Naive thymus-derived CD4-positive, alpha-beta T cell (primary cell): ENCODE measurements at regions of chr16 and their contacts with region 1.

Region 1: GRCh38 chr16:28823872-28824716 is 1.3 kb downstream of the ATXN2L start:
- DNase-seq: peak; percentile 92 to 97 (median 94)
- ATAC-seq: peak; percentile 82
- H3K4me3 ChIP-seq: peak overlapping the region; percentile 79
- H3K4me3 Mint-ChIP-seq: peak overlapping the region; percentile 92 to 99 (median 97)
- H3K27ac ChIP-seq: peak overlapping the region; percentile 94
- H3K27ac Mint-ChIP-seq: peak overlapping the region; percentile 96 to 100 (median 99)
- H3K4me1 ChIP-seq: peaks cover 19 to 20% of the 10 kb centered on the region in 2 donors
- H3K4me1 Mint-ChIP-seq: peaks cover 14 to 55% (median 52%) of the 10 kb centered on the region in 7 donors
- H3K27me3 ChIP-seq: no peaks in the 10 kb centered on the region
- H3K27me3 Mint-ChIP-seq: peaks cover 0 to 4% (median 0%) of the 10 kb centered on the region in 5 donors

Region 2: DNA sequence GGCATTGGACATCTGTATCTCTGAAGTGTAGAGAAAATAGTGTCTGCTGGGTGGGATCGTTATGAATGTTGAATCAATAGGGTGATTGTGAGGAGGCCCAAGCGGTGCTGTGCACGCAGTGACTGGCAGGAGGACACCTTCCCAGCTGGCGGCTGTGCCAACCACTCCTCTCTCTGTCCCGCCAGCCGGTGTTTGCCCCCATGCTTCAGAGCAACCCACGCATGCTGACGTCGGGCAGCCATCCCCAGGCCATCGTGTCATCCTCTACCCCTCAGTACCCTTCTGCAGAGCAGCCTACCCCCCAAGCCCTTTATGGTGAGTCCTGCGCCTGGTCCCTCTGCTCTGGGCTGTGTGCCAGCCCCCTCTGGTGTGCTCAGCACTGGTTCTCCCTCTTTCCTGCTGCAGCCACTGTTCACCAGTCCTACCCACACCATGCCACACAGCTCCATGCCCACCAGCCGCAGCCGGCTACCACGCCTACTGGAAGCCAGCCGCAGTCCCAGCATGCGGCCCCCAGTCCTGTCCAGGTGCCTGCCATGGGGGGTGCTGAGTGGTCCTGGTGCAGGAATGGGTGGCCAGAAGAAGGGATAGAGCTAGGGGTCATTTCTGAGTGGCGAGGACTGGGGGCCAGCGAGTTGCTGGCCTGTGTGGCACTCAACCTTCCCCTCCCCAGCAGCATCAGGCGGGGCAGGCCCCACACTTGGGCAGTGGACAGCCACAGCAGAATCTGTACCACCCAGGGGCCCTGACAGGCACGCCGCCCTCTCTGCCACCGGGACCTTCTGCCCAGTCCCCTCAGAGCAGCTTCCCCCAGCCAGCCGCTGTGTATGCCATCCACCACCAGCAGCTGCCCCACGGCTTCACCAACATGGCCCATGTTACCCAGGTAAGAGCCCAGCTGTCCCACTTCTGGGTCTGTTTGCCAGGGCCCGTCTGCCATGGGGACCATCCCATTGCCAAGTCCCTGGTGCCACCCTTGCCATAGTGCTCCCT is 11.1 kb after region 1 on chr16:
- CTCF ChIA-PET with region 1: interaction called, 3 read pairs
- POLR2A ChIA-PET with region 1: interaction called, 13 read pairs
- intact Hi-C with region 1: no loop called
- DNase-seq: peak in 1 of 9 donors; percentile 8
- ATAC-seq: no peak
- H3K4me3 ChIP-seq: no peak overlapping the region
- H3K4me3 Mint-ChIP-seq: peak overlapping the region in 2 of 10 donors; percentile 18 to 37
- H3K27ac ChIP-seq: no peak overlapping the region
- H3K27ac Mint-ChIP-seq: peak overlapping the region in 4 of 9 donors; percentile 15 to 54 (median 37)
- H3K4me1 ChIP-seq: no peaks in the 10 kb centered on the region
- H3K4me1 Mint-ChIP-seq: peaks cover 0 to 16% (median 11%) of the 10 kb centered on the region in 7 donors
- H3K27me3 ChIP-seq: no peaks in the 10 kb centered on the region
- H3K27me3 Mint-ChIP-seq: no peaks in the 10 kb centered on the region

Region 3: DNA sequence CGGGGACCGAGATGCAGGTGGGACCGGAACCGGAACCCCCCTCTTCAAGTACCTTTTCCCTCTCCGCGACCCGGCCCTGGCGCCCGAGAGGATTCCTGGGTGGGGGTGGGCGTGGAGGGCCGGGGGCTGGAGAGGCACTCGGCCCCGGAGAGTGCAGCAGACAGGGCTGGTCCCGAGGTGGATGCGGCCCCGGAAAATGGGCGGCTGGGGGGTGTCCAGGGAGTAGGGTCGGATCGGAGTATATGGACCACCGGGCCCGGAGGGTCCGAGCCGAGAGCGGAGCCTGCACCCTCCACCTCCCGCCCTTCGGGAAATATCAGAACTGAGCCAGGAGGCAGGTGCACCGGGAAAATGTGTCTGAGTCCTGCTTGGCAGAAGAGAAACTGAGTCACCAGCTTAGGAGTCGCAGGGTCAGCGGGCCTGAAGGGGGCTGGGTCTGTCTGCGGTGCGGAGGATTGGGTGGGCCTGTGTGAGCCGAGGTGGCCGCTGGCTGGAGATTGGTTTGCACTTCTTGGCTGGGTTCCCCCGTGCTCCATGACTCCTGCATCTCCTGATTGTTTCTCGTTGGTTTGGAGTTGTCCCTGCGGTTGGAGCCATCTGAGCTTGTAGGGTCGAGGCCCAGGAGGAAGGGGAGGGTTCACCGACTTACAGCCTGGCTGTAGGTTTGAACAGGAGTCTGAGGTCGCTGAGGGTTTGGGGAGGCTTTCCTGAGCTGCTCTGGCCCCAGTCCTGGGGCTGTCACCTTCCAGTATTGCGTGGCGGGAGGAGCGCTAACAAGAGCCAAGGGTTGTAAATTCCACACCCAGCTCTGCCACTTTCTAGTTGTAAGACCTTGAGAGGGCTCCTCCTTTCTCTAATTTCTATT is 40.1 kb after region 1 on chr16:
- CTCF ChIA-PET with region 1: interaction called, 3 read pairs
- POLR2A ChIA-PET with region 1: interaction called, 14 read pairs
- intact Hi-C with region 1: loop called (anchors 1 kb)
- DNase-seq: peak in 4 of 9 donors; percentile 24 to 43 (median 30)
- ATAC-seq: no peak
- H3K4me3 ChIP-seq: peak overlapping the region; percentile 96
- H3K4me3 Mint-ChIP-seq: peak overlapping the region; percentile 97 to 100 (median 99)
- H3K27ac ChIP-seq: peak overlapping the region; percentile 85
- H3K27ac Mint-ChIP-seq: peak overlapping the region; percentile 95 to 99 (median 97)
- H3K4me1 ChIP-seq: peaks cover 7 to 11% of the 10 kb centered on the region in 2 donors
- H3K4me1 Mint-ChIP-seq: peaks cover 15 to 42% (median 29%) of the 10 kb centered on the region in 7 donors
- H3K27me3 ChIP-seq: no peaks in the 10 kb centered on the region
- H3K27me3 Mint-ChIP-seq: no peaks in the 10 kb centered on the region

Region 4: DNA sequence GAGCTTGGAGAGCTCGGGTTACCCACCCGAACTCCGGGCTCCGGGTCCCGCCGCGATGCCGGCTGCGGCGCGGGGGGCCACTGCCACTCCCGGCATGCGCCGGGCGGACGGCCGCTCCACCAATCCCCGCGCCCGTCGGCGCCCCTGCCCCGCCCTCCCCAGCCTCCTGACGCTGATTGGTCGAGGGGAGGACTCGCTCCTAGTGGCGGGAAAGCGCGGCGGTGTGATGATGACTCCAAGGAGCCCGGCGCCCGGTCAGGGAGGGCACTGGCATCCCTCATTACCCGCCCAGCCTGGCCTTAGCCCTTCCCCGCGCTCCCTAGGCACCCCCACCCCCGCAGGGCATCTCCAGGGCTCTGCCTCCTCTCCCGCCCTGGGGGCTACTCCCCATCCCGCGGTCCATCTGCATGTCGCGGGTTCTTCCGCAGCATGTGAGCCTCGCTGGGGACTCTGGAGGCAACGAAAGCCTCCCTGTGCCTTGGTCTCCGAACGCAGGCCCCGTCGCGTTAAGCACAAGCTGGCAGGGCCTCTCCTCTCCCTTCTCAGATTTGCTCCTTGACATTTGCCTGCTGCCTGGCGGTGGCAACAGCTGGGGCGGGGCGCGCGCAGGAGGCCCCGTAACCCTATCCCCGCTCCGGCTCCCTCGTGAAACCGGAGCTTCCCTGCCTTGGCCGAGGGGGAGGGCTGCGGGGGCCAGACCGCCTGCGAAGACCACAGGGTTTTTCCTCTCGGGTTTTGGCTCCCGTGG is 55.9 kb after region 1 on chr16:
- CTCF ChIA-PET with region 1: no interaction called
- POLR2A ChIA-PET with region 1: no interaction called
- intact Hi-C with region 1: loop called in 1 of 2 experiments (anchors 1 kb)
- DNase-seq: peak; percentile 64 to 89 (median 78)
- ATAC-seq: peak; percentile 99
- H3K4me3 ChIP-seq: peak overlapping the region; percentile 92
- H3K4me3 Mint-ChIP-seq: peak overlapping the region; percentile 82 to 93 (median 88)
- H3K27ac ChIP-seq: peak overlapping the region; percentile 69
- H3K27ac Mint-ChIP-seq: peak overlapping the region in 4 of 9 donors; percentile 14 to 70 (median 43)
- H3K4me1 ChIP-seq: peaks cover 0 to 16% of the 10 kb centered on the region in 2 donors
- H3K4me1 Mint-ChIP-seq: peaks cover 0 to 19% (median 15%) of the 10 kb centered on the region in 7 donors
- H3K27me3 ChIP-seq: no peaks in the 10 kb centered on the region
- H3K27me3 Mint-ChIP-seq: peaks cover 3 to 14% (median 9%) of the 10 kb centered on the region in 5 donors

Region 5: DNA sequence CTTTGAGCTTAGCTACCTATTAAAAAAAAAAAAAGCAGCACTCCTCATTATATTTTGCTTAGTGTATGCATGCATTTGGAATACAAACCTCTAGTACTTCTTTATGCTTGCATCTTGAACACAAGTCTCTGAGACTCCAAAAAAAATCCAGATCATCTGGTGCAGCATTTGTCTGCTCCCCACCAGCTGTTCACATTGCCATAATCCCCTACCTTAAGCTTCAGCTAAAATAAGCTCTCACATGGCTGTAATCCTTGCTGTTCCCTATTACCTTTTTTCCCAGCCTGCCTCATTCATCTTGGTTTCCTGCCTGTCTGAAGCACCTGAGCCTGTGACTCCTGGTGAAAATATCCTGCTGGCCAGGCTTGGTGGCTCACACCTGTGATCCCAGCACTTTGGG is 119.2 kb after region 1 on chr16:
- CTCF ChIA-PET with region 1: interaction called, 10 read pairs
- POLR2A ChIA-PET with region 1: interaction called, 3 read pairs
- intact Hi-C with region 1: loop called in 1 of 2 experiments (anchors 1 kb)
- DNase-seq: no peak
- ATAC-seq: no peak
- H3K4me3 ChIP-seq: no peak overlapping the region
- H3K4me3 Mint-ChIP-seq: no peak overlapping the region
- H3K27ac ChIP-seq: no peak overlapping the region
- H3K27ac Mint-ChIP-seq: no peak overlapping the region
- H3K4me1 ChIP-seq: peaks cover 0 to 8% of the 10 kb centered on the region in 2 donors
- H3K4me1 Mint-ChIP-seq: peaks cover 7 to 19% (median 8%) of the 10 kb centered on the region in 7 donors
- H3K27me3 ChIP-seq: no peaks in the 10 kb centered on the region
- H3K27me3 Mint-ChIP-seq: peaks cover 0 to 10% (median 0%) of the 10 kb centered on the region in 5 donors

Region 6: DNA sequence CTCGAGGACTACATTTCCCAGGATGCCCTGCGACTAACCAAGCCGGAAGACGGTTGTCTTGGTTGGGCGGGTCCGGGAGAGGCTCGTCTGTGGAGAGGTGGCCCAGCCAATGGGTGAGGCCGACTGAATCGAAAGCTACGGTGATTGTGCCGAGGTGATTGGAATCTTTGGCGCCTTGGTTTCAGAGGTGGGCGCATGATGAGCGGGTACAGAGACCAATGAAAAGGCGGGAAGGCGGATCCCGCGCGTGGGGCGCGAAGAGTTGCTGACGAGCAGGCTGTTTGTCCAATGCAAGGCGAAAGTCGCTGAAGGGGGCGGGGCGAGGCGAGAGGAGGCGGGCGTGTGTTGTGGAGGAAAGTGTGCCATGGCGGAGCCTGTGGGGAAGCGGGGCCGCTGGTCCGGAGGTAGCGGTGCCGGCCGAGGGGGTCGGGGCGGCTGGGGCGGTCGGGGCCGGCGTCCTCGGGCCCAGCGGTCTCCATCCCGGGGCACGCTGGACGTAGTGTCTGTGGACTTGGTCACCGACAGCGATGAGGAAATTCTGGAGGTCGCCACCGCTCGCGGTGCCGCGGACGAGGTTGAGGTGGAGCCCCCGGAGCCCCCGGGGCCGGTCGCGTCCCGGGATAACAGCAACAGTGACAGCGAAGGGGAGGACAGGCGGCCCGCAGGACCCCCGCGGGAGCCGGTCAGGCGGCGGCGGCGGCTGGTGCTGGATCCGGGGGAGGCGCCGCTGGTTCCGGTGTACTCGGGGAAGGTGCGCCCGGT is 126.7 kb after region 1 on chr16 and contains the start of gene NFATC2IP:
- CTCF ChIA-PET with region 1: interaction called, 10 read pairs
- POLR2A ChIA-PET with region 1: interaction called, 11 read pairs
- intact Hi-C with region 1: loop called (anchors 1 kb)
- DNase-seq: peak; percentile 98 to 100 (median 99)
- ATAC-seq: peak; percentile 98
- H3K4me3 ChIP-seq: peak within 1 kb of the TSS; percentile 73
- H3K4me3 Mint-ChIP-seq: peak within 1 kb of the TSS; percentile 75 to 100 (median 92)
- H3K27ac ChIP-seq: peak within 1 kb of the TSS; percentile 81
- H3K27ac Mint-ChIP-seq: peak within 1 kb of the TSS; percentile 67 to 94 (median 86)
- H3K4me1 ChIP-seq: peaks cover 10 to 14% of the 10 kb centered on the region in 2 donors
- H3K4me1 Mint-ChIP-seq: peaks cover 10 to 41% (median 37%) of the 10 kb centered on the region in 7 donors
- H3K27me3 ChIP-seq: no peaks in the 10 kb centered on the region
- H3K27me3 Mint-ChIP-seq: peaks cover 0 to 6% (median 0%) of the 10 kb centered on the region in 5 donors
- total RNA-seq, gene NFATC2IP: 70.9 to 117 (median 111) TPM